ENCODE measurements at regions of chr6 and their contacts with region 1.

Region 1: GRCh38 chr6:19851241-19852089 is 14.3 kb downstream of the ID4 start:
- DNase-seq: peak in 4 of 5 donors; percentile 74 to 93 (median 83)
- H3K4me3 ChIP-seq: peak overlapping the region; percentile 10 to 62 (median 21)
- H3K27ac ChIP-seq: peak overlapping the region; percentile 2 to 32
- H3K4me1 ChIP-seq: peaks cover 0 to 4% (median 0%) of the 10 kb centered on the region in 3 donors
- H3K27me3 ChIP-seq: no peaks in the 10 kb centered on the region
- CTCF ChIP-seq: peak; percentile 86

Region 2: DNA sequence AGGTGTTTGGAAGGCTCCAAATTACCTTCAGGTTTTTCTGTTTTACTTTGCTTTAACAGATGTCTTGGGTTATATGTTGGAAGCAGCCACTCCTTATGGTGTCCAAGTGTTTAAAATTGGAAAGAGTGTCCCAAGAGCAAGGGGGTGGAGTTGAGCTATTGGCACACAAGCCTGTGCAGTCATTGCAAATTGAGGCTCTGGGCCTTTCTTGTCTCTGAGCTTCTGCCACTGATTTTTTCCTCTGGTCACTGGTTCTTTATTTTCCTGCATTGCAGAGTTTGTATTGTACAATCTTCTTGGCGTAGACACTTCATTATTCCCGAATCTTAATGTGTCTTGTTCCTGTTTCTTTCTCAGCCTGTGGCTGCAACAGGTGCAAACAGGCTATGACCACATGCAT is 865.5 kb before region 1 on chr6:
- intact Hi-C with region 1: loop called (anchors 10 kb)
- DNase-seq: no peak
- H3K4me3 ChIP-seq: no peak overlapping the region
- H3K27ac ChIP-seq: no peak overlapping the region
- H3K4me1 ChIP-seq: no peaks in the 10 kb centered on the region
- H3K27me3 ChIP-seq: no peaks in the 10 kb centered on the region
- CTCF ChIP-seq: no peak

Region 3: DNA sequence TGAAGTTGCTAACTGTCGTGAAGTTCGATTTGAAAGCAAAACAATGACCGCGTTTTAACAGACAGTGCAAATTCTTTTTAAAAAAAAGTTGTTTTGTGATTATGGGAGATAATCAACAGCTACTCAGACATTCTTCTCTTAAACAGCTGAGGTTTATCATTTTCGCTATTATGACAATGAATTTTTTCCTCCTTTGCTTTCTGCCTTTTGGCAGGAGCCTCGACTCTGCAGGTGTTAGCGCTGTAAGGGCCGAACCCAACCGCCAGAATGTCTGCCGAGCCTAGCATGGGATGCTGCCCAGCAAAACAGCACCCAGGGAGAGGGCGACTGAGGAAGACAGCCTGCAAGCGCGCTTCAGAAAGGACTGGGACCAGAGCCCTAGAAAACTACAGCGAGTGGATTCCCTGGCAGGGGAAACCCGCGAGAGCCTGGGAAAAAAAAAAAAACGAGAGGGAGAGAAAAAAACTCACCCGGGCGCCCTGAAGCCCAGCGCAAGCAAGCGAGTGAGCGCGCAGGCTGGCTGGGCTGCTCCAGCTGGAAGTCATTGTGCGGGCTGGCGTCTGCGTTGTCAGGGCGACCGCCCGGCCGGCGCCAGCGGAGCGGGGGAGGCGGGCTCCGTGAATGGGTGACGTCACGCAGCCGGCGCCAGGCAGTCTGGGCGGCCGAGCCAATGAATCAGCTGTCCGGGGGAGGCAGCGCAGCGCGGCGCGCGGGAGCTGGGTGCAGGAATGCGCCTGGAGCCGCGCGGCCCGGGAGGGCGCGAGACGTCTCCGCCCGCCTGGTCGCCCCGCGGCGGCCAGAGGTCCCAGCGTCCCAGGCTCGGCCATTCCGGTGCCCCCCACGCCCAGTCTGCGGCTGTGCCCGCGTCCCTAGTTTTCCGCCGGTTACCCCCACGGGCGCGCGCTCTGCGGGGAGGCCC is 47.0 kb before region 1 on chr6:
- intact Hi-C with region 1: no loop called
- DNase-seq: peak; percentile 98 to 99 (median 99)
- H3K4me3 ChIP-seq: peak overlapping the region; percentile 56 to 83 (median 64)
- H3K27ac ChIP-seq: peak overlapping the region; percentile 93 to 95
- H3K4me1 ChIP-seq: peaks cover 0 to 2% (median 0%) of the 10 kb centered on the region in 3 donors
- H3K27me3 ChIP-seq: no peaks in the 10 kb centered on the region
- CTCF ChIP-seq: no peak

Measured in kidney (tissue), 22 donors.